H1 (cell line): ENCODE measurements at regions of chr1 and their contacts with region 1.

Region 1: DNA sequence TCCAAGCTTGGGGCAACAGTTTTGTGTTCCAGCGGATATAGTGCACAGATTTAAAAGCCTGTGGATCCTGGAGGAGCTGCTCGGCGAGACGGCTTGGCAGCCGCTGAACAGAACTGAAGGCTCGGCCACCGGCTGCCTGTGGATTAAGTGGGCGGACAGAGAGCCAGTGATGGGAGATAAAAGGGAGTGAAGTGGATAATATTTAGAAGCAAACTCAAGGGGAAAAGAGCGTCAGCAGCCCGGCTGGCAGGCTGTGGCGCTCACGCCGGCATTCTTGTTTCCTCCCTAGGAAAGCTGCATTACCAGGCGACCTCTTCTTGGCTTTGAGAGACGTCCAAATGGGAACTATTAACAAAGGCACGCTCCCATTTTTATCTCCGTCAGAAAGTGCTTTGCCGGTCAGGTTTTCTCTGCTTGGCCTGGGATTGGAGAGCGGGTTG is 10.4 kb downstream of the TRABD2B start:
- DNase-seq: no peak
- H3K4me3 ChIP-seq: no peak overlapping the region
- H3K27ac ChIP-seq: no peak overlapping the region
- H3K4me1 ChIP-seq: peaks cover 17 to 32% (median 20%) of the 10 kb centered on the region in 4 experiments
- H3K27me3 ChIP-seq: peaks cover 0 to 14% (median 9%) of the 10 kb centered on the region in 4 experiments; a peak in 5 of 7 replicates
- CTCF ChIP-seq: no peak
- EP300 ChIP-seq: no peak
- POLR2A ChIP-seq: no peak
- RAD21 ChIP-seq: no peak

Region 2: DNA sequence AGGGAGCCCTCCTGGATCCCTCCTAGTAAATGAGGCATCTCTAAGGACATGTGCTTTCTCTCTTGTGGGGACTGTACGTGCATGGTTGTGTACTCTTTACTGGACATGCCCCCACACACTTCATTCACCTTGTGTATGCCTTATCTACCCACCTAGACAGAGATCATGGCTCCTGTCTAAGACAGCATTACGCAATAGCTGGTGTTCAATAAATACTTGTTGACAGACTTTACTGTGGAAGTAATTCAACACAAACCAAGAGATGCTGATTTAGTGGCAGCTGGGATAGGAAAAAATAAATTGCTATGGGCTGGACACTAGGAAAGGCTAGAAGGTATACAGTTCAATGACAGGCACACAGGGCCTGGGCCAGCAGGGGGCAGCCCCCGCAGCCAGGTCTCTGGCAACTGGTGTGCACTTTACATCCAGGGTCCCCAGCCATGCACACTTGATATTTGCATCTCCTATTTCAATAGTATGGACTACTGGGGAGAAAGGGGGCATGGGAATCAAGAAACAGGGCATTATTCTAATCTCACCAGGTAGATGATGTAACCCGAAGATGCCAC is 13.8 kb before region 1 on chr1:
- CTCF ChIA-PET with region 1: interaction called, 12 read pairs
- POLR2A ChIA-PET with region 1: interaction called, 3 read pairs
- DNase-seq: no peak
- H3K4me3 ChIP-seq: no peak overlapping the region
- H3K27ac ChIP-seq: no peak overlapping the region
- H3K4me1 ChIP-seq: peaks cover 0 to 2% (median 0%) of the 10 kb centered on the region in 4 experiments; a peak in 2 of 7 replicates
- H3K27me3 ChIP-seq: no peaks in the 10 kb centered on the region
- CTCF ChIP-seq: peak; percentile 37 to 65 (median 51)
- EP300 ChIP-seq: no peak
- POLR2A ChIP-seq: no peak
- RAD21 ChIP-seq: peak; percentile 24 to 38; a peak in 3 of 4 replicates

Region 3: DNA sequence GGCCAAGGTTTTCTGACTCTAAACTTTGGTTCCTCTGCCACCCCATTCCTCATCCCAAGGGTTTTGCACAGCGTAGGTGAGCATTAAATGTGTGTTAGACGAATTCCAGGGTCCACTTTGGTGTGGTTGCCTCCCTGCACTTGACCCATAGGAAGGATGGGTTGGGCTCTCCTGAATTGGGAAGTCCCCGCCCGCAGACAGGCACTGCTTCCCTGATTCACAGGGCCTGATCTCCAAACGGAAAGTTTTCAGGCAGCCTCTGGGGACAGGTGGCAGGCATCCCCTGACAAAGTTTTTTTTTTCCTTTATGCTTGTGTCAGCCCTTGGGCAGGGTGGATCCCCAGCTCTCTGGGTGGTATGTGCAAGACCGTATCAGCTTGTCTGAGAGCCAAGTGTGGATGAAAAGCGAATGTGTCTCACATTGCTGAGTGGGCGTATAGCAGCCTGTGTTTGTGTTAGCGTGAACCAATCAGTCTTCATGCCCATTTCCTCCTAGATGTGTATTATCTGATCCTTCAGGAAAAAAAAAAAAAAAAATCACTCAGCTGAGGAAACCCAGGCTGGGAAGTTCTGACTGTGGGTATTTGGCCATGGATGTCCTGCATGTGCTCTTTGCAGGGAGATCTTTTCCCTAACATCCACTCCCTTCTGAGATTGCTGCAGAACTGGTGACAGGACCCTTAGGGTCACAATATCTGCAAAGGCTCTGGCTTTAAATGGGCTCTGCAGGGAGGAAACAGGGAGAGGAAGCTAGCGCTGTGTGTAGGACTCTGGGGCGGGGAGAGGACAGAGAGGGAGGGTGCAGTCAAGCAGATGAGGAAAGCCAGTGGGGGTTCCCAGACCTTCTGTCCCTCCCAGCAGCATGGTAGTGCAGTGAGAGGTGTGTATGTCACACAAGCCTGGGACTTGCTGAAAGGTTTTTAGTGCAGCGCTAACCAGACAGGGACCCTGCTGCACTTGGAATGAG is 52.6 kb after region 1 on chr1:
- CTCF ChIA-PET with region 1: no interaction called
- POLR2A ChIA-PET with region 1: no interaction called
- DNase-seq: no peak
- H3K4me3 ChIP-seq: no peak overlapping the region
- H3K27ac ChIP-seq: no peak overlapping the region
- H3K4me1 ChIP-seq: peaks cover 6 to 14% (median 11%) of the 10 kb centered on the region in 4 experiments
- H3K27me3 ChIP-seq: no peaks in the 10 kb centered on the region
- CTCF ChIP-seq: no peak
- EP300 ChIP-seq: no peak
- POLR2A ChIP-seq: no peak
- RAD21 ChIP-seq: no peak